Natural killer cell (primary cell): ENCODE measurements at regions of chr1 and their contacts with region 1.

Region 1: GRCh38 chr1:11693024-11693590 is 1.6 kb downstream of the DRAXIN start:
- DNase-seq: peak; percentile 61 to 64
- ATAC-seq: peak; percentile 77 to 80 (median 78)
- H3K4me3 ChIP-seq: no peak overlapping the region
- H3K4me3 Mint-ChIP-seq: peak overlapping the region; percentile 87
- H3K27ac ChIP-seq: peak overlapping the region; percentile 59
- H3K27ac Mint-ChIP-seq: peak overlapping the region; percentile 79 to 85
- H3K4me1 ChIP-seq: peaks cover 41% of the 10 kb centered on the region
- H3K4me1 Mint-ChIP-seq: peaks cover 38 to 46% of the 10 kb centered on the region in 2 donors
- H3K27me3 ChIP-seq: peaks cover 16% of the 10 kb centered on the region
- H3K27me3 Mint-ChIP-seq: peaks cover 0 to 22% of the 10 kb centered on the region in 2 donors
- CTCF ChIP-seq: no peak

Region 2: DNA sequence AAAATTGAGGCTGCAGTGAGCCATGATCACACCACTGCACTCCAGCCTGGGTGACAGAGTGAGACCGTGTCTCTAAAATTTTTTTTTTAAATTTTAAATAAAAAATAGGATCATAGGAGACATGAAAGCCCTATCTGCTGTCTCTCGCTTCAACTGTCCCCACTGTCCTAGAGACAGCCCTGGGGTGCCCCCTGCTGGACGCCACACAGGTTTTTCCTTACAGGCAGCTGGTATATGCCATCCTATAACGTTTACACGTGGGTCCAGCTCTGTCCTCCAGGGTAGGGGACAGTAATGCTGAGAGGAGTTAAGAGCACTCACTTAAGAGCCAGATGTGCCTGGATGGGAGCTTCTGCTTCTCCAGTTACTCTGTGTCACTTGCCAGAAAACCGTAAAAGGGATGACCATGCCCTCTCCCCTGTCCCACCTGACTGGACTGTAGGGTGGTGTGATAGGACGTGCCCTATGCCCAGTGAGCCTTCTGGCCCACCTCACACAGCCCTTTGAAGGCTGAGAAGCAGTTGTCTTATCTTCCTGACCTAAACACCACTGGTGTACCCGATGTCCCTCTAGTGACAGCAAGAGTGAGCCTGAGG is 47.3 kb before region 1 on chr1:
- intact Hi-C with region 1: no loop called
- DNase-seq: peak; percentile 72 to 87
- ATAC-seq: peak; percentile 26 to 55 (median 34)
- H3K4me3 ChIP-seq: no peak overlapping the region
- H3K4me3 Mint-ChIP-seq: no peak overlapping the region
- H3K27ac ChIP-seq: no peak overlapping the region
- H3K27ac Mint-ChIP-seq: peak overlapping the region in 1 of 2 donors; percentile 40
- H3K4me1 ChIP-seq: peaks cover 23% of the 10 kb centered on the region
- H3K4me1 Mint-ChIP-seq: peaks cover 2 to 22% of the 10 kb centered on the region in 2 donors
- H3K27me3 ChIP-seq: no peaks in the 10 kb centered on the region
- H3K27me3 Mint-ChIP-seq: no peaks in the 10 kb centered on the region
- CTCF ChIP-seq: peak; percentile 81

Region 3: DNA sequence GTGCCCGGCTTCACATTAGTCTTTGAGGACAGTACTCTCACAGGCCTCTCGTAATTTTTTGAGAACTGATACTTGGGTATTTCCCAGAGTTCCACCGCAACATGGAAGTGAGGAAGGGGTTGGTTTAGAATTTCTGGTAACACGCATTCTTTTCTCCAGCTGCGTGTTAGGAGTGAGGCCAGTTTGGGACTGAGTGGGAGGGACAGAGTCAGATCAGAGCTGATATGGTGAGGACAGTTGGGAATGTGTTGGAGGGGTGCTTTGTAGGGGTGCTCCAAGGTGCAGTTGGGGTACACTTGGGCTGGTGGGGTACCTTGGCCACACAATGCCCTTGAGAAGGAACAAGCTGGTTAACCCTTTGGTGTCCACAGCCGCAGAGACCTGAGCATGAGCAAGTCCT is 22.4 kb before region 1 on chr1:
- intact Hi-C with region 1: loop called (anchors 2 kb)
- DNase-seq: no peak
- ATAC-seq: no peak
- H3K4me3 ChIP-seq: no peak overlapping the region
- H3K4me3 Mint-ChIP-seq: no peak overlapping the region
- H3K27ac ChIP-seq: no peak overlapping the region
- H3K27ac Mint-ChIP-seq: no peak overlapping the region
- H3K4me1 ChIP-seq: peaks cover 10% of the 10 kb centered on the region
- H3K4me1 Mint-ChIP-seq: peaks cover 6 to 21% of the 10 kb centered on the region in 2 donors
- H3K27me3 ChIP-seq: no peaks in the 10 kb centered on the region
- H3K27me3 Mint-ChIP-seq: no peaks in the 10 kb centered on the region
- CTCF ChIP-seq: no peak

Region 4: GRCh38 chr1:11681071-11681771 is 11.9 kb before region 1 on chr1 and contains the start of gene MAD2L2:
- intact Hi-C with region 1: loop called (anchors 1 kb)
- DNase-seq: peak; percentile 90 to 93
- ATAC-seq: peak; percentile 92 to 96 (median 93)
- H3K4me3 ChIP-seq: peak within 1 kb of the TSS; percentile 98
- H3K4me3 Mint-ChIP-seq: peak within 1 kb of the TSS; percentile 92
- H3K27ac ChIP-seq: peak within 1 kb of the TSS; percentile 61
- H3K27ac Mint-ChIP-seq: peak within 1 kb of the TSS; percentile 62 to 91
- H3K4me1 ChIP-seq: peaks cover 23% of the 10 kb centered on the region
- H3K4me1 Mint-ChIP-seq: peaks cover 5 to 24% of the 10 kb centered on the region in 2 donors
- H3K27me3 ChIP-seq: no peaks in the 10 kb centered on the region
- H3K27me3 Mint-ChIP-seq: no peaks in the 10 kb centered on the region
- CTCF ChIP-seq: no peak
- total RNA-seq, gene MAD2L2: 50.6 to 66.0 (median 60.4) TPM

Region 5: GRCh38 chr1:11703357-11704193 is 10.5 kb after region 1 on chr1:
- intact Hi-C with region 1: loop called (anchors 2 kb)
- DNase-seq: no peak
- ATAC-seq: no peak
- H3K4me3 ChIP-seq: no peak overlapping the region
- H3K4me3 Mint-ChIP-seq: no peak overlapping the region
- H3K27ac ChIP-seq: no peak overlapping the region
- H3K27ac Mint-ChIP-seq: no peak overlapping the region
- H3K4me1 ChIP-seq: no peaks in the 10 kb centered on the region
- H3K4me1 Mint-ChIP-seq: peaks cover 0 to 9% of the 10 kb centered on the region in 2 donors
- H3K27me3 ChIP-seq: peaks cover 9% of the 10 kb centered on the region
- H3K27me3 Mint-ChIP-seq: no peaks in the 10 kb centered on the region
- CTCF ChIP-seq: no peak

Region 6: DNA sequence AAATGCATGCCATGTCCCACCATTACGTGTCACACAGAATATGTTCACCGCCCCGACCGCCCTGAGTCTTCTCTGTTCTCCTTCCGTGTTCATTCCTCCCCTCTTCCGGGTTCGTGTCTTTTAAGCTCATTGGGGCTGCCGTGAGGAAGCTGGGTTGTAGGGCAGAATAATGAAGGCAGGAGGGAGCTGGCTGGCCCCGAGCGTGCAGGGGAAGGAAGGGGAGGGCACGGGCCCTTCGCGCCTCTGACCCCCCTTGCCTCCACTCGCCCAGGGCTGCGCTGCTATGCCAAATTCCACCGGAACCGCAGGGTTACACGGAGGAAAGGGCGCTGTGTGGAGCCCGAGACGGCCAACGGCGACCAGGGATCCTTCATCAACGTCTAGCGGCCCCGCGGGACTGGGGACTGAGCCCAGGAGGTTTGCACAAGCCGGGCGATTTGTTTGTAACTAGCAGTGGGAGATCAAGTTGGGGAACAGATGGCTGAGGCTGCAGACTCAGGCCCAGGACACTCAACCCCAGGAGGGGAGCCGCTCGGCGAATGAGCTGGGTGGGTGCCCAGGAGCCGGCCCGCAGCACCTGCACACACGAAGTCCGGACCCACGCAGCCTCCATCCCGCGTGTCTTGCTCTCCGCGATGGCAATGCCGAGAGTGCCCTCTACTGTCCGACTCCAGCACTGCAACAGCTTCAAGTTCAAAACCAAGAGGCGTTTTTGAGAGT is 26.4 kb after region 1 on chr1:
- intact Hi-C with region 1: loop called (anchors 1 kb)
- DNase-seq: peak; percentile 89 to 95
- ATAC-seq: peak; percentile 84 to 92 (median 87)
- H3K4me3 ChIP-seq: peak overlapping the region; percentile 40
- H3K4me3 Mint-ChIP-seq: peak overlapping the region; percentile 83
- H3K27ac ChIP-seq: peak overlapping the region; percentile 75
- H3K27ac Mint-ChIP-seq: peak overlapping the region; percentile 91 to 93
- H3K4me1 ChIP-seq: peaks cover 20% of the 10 kb centered on the region
- H3K4me1 Mint-ChIP-seq: peaks cover 17 to 19% of the 10 kb centered on the region in 2 donors
- H3K27me3 ChIP-seq: no peaks in the 10 kb centered on the region
- H3K27me3 Mint-ChIP-seq: no peaks in the 10 kb centered on the region
- CTCF ChIP-seq: peak; percentile 98

Region 7: DNA sequence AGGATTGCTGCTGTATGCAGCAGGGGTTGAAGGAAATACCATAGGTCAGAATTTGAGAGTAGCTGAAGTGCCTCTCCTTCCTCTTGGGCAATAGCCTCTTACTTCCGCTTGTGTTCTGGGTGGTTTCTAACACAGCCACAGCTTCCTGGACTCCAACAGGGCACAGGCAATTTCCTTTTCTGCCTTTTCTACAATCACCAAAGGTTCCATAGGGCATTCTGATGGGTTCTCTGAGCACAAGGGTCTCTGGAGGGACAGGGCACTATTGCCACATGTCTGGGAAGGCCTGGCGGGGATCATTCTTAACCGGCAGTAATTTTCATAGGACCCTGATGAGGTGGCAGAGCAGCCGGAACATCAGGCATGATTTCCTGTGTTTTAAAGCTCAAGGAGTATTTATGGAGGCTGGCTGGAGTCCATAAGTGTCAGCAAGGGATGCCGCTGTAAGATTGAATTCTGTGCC is 37.4 kb after region 1 on chr1:
- intact Hi-C with region 1: loop called (anchors 1 kb)
- DNase-seq: peak in 1 of 2 donors; percentile 81
- ATAC-seq: peak; percentile 84 to 91 (median 90)
- H3K4me3 ChIP-seq: peak overlapping the region; percentile 6
- H3K4me3 Mint-ChIP-seq: peak overlapping the region; percentile 91
- H3K27ac ChIP-seq: peak overlapping the region; percentile 81
- H3K27ac Mint-ChIP-seq: peak overlapping the region; percentile 88 to 95
- H3K4me1 ChIP-seq: peaks cover 60% of the 10 kb centered on the region
- H3K4me1 Mint-ChIP-seq: peaks cover 39 to 42% of the 10 kb centered on the region in 2 donors
- H3K27me3 ChIP-seq: no peaks in the 10 kb centered on the region
- H3K27me3 Mint-ChIP-seq: no peaks in the 10 kb centered on the region
- CTCF ChIP-seq: no peak